ENCODE measurements at regions of chr4 and their contacts with region 1.

Region 1: DNA sequence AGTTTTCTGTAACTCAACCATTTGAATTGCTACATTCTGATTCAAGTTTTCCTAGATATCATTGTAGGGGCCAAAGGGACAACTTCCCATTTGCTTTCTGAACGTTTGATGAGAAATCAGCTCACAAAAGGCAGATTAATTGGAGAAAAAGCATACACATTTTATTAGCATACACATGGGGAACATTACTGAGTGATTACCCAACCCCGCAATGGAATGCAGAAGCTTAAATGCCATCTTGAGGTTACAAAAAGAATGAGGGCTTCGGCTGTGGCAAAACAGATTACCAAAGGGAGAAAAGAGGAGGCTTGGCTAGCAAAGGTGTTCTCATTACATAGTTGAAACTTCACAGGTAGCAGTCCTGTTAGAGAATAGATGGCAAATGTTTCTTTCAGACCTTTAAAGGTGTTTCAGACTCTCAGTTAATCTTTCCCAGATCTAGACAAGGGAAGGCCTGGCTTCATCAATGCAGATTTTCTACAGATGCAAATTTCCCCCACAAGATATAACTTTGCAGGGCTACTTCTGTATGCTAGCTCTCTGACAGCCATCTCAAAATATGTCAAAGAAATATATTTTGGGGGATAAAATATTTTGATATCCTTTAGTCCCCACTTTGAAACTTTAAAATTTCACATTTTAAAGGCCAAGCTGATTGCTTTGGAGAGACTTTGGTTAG is 26.5 kb upstream of the HERC6 start:
- DNase-seq: no peak

Region 2: DNA sequence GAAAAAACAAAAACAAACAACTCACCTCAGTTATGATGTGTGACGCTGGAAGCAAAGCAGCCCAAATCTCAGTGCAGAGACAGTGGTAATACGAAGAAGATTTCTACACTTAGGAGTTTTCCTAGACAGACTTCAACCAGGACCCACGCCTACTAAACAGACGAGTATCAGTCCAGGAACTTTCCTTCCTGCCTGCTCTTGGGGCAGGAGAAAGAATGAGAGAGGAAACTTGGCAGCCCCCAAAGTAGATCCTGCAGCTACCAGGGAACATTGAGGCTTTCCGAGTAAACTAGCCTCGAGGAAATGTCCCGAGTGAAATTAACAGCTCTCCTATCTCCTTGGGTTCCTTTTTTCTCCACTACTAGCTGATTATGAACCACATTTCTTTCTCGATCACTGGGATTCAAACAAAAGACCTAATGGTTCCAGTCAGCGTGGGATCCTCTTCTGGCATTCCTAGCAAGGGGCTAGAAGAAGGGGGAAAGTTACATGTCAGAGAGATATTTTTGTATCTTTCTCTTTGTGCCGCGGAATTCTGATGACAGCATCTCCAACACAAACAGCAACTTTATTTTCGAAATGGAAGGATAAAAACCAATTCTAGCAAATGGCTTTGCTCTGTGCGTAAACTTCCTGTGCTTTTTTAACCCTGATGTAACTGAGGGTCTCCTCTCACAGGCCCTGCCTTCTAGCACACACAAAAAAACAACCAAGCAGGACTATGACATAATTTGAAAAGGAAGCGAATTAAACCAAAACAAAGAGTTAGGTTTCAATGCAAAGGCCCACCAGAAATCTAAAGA is 121.0 kb before region 1 on chr4:
- in situ Hi-C with region 1: loop called (anchors 10 kb)
- DNase-seq: no peak

Region 3: GRCh38 chr4:88503344-88503743 is 151.1 kb after region 1 on chr4:
- in situ Hi-C with region 1: no loop called
- DNase-seq: no peak

Measured in Caki2 (cell line).